ENCODE measurements at regions of chr4 and their contacts with region 1.

Region 1: GRCh38 chr4:10554694-10555093 is 97.5 kb upstream of the ZNF518B start:
- H3K4me3 Mint-ChIP-seq: no peak overlapping the region
- H3K27ac Mint-ChIP-seq: no peak overlapping the region
- H3K4me1 Mint-ChIP-seq: peaks cover 22% of the 10 kb centered on the region
- H3K27me3 Mint-ChIP-seq: no peaks in the 10 kb centered on the region

Region 2: GRCh38 chr4:9762823-9763475 is 791.7 kb before region 1 on chr4:
- intact Hi-C with region 1: loop called (anchors 5 kb)
- H3K4me3 Mint-ChIP-seq: no peak overlapping the region
- H3K27ac Mint-ChIP-seq: no peak overlapping the region
- H3K4me1 Mint-ChIP-seq: peaks cover 5% of the 10 kb centered on the region
- H3K27me3 Mint-ChIP-seq: peaks cover 24% of the 10 kb centered on the region

Region 3: DNA sequence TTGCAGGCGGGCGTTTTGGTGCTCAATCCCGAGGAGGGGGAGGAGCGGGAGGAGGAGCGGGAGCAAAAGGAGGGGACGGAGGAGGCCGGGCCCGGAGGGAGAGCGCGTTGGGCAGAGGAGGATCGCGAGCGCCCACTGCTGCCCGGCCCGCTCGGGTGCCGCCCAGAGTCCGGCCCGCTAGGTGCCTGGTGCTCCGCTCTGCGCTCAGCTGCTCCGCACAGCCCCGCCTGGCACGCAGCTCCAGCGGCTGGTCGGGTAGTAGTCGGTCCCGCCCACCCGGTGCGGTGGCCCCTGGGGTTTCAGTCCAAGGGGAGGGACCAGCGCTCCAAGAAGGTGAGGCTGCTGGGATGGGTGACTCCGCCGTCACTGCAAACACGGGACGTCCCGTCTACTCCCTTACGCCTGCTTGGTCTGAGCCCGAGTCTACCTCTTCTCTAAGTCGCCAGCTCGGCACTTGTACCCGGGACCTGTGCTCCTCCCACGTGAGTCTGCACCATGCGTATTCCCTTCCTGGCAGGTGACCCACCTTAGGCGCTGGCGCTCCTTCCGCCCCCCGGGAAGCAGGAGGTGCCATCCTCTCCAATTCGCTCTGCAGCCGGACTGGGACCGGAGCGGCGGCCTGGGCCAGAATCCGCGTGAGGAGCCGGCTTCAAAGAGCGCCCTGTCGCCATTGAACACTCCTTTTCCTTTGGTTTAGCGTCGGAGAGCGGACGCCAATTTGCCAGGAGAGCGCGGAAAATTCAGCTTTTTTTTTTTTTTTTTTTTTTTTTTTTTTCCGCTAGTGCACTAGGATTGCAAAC is 874.4 kb after region 1 on chr4:
- intact Hi-C with region 1: loop called (anchors 10 kb)
- H3K4me3 Mint-ChIP-seq: peak overlapping the region; percentile 76
- H3K27ac Mint-ChIP-seq: peak overlapping the region; percentile 85
- H3K4me1 Mint-ChIP-seq: peaks cover 23% of the 10 kb centered on the region
- H3K27me3 Mint-ChIP-seq: peaks cover 55% of the 10 kb centered on the region

Measured in dendritic cell treated with granulocyte-macrophage colony-stimulating factor and Interleukin-4, amounts not matched to agents 40 ng/mL and 50 ng/mL, for 4 days (primary cell).